ENCODE measurements at regions of chr2 and their contacts with region 1.

Region 1: GRCh38 chr2:43424262-43425207 is 171.3 kb downstream of the THADA start:
- DNase-seq: no peak
- H3K4me3 Mint-ChIP-seq: peak overlapping the region; percentile 4
- H3K27ac Mint-ChIP-seq: peak overlapping the region; percentile 37
- H3K4me1 Mint-ChIP-seq: peaks cover 68% of the 10 kb centered on the region
- H3K27me3 Mint-ChIP-seq: no peaks in the 10 kb centered on the region
- CTCF ChIP-seq: no peak

Region 2: DNA sequence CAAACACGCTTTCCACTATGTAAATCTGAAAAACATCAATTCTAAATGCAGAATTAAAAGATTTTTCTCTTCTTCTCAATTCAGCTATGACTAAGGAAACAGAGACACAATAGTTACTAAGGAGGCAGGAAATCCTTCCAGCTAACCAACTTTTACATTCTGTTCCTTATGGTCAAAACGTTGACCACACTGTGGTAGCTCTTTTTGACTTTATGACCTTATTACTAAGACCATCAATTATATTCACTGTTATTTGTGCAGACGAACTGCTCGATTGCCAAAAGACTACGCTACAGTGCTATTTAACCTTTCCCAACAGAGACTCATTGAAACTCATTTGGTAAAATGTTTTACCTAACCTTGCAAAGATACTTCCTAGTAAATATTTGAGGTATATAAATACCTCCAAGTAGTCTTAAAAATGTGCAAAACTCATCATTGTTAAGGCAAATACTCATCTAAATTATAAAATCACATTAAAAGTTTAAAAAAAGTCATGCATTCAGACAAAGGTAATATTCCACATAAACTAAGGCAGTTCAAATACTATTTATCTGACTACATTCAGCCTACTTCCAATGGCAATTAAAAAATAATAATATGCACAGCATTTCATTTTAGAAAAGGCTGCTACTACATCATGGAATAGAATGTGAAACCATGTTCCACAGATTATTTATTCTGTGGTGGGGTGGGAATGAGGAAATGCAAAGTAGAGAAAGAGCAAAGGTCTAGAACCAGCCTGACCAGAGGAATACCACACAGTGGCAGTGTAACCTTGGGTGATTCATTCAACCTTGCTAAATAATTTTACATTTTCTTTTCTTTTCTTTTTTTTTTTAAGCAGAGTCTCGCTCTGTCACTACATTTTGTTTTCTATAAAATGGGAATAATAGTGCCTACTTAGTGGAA is 31.5 kb after region 1 on chr2:
- CTCF ChIA-PET with region 1: no interaction called
- intact Hi-C with region 1: loop called (anchors 5 kb)
- DNase-seq: peak; percentile 47
- H3K4me3 Mint-ChIP-seq: peak overlapping the region; percentile 35
- H3K27ac Mint-ChIP-seq: peak overlapping the region; percentile 35
- H3K4me1 Mint-ChIP-seq: peaks cover 67% of the 10 kb centered on the region
- H3K27me3 Mint-ChIP-seq: no peaks in the 10 kb centered on the region
- CTCF ChIP-seq: no peak

Measured in Calu3 (cell line).